Activated CD4-positive, alpha-beta T cell treated with anti-CD3 and anti-CD28 coated beads for 36 hours (primary cell): ENCODE measurements at regions of chr3 and their contacts with region 1.

Region 1: GRCh38 chr3:30042274-30042859 is 564.0 kb upstream of the TGFBR2 start:
- DNase-seq: peak; percentile 75
- ATAC-seq: no peak
- H3K4me3 Mint-ChIP-seq: no peak overlapping the region
- H3K27ac Mint-ChIP-seq: no peak overlapping the region
- H3K4me1 Mint-ChIP-seq: peaks cover 3% of the 10 kb centered on the region
- H3K27me3 Mint-ChIP-seq: peaks cover 13% of the 10 kb centered on the region

Region 2: GRCh38 chr3:30030735-30031134 is 11.6 kb before region 1 on chr3:
- CTCF ChIA-PET with region 1: interaction called, 10 read pairs
- POLR2A ChIA-PET with region 1: no interaction called
- intact Hi-C with region 1: no loop called
- DNase-seq: no peak
- ATAC-seq: no peak
- H3K4me3 Mint-ChIP-seq: no peak overlapping the region
- H3K27ac Mint-ChIP-seq: no peak overlapping the region
- H3K4me1 Mint-ChIP-seq: no peaks in the 10 kb centered on the region
- H3K27me3 Mint-ChIP-seq: peaks cover 9% of the 10 kb centered on the region